Panc1 (cell line): ENCODE measurements at regions of chr9 and their contacts with region 1.

Region 1: DNA sequence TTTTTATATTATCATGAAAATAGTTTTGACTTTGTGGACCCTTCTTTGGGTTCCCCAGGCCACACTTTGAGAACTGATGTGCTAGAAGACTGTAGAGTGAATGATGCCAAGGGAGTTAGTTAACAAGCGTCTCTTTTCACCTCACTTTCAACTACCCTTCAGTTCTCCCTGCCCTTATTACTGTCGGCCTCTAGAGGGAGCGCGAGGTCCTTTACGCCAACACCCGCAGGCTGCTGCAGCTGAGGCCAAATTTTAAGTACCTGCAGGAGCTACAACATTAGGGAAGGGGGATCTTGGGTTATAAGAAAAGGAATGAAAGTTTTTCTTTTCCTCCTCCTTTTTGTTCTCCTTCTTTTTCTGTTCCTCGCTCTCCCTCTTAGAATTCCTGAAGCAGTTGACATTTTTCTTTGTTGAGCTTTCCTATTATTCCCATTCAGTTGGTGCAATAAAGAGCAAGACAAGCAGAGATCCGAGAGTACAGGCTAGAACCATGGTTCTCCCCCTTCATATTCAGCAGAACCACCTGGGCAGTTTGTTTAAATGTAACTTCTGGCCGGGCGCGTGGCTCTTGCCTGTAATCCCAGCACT is 84.0 kb downstream of the ZFAND5 start:
- DNase-seq: peak; percentile 42
- ATAC-seq: peak; percentile 91
- H3K4me3 ChIP-seq: no peak overlapping the region
- H3K27ac ChIP-seq: no peak overlapping the region
- H3K4me1 ChIP-seq: no peaks in the 10 kb centered on the region
- H3K27me3 ChIP-seq: no peaks in the 10 kb centered on the region
- CTCF ChIP-seq: peak; percentile 91

Region 2: GRCh38 chr9:72356041-72356582 is 75.1 kb after region 1 on chr9:
- CTCF ChIA-PET with region 1: no interaction called
- POLR2A ChIA-PET with region 1: no interaction called
- in situ Hi-C with region 1: no loop called
- intact Hi-C with region 1: loop called (anchors 10 kb)
- DNase-seq: no peak
- ATAC-seq: no peak
- H3K4me3 ChIP-seq: no peak overlapping the region
- H3K27ac ChIP-seq: peak overlapping the region; percentile 48
- H3K4me1 ChIP-seq: peaks cover 80% of the 10 kb centered on the region
- H3K27me3 ChIP-seq: no peaks in the 10 kb centered on the region
- CTCF ChIP-seq: no peak

Region 3: DNA sequence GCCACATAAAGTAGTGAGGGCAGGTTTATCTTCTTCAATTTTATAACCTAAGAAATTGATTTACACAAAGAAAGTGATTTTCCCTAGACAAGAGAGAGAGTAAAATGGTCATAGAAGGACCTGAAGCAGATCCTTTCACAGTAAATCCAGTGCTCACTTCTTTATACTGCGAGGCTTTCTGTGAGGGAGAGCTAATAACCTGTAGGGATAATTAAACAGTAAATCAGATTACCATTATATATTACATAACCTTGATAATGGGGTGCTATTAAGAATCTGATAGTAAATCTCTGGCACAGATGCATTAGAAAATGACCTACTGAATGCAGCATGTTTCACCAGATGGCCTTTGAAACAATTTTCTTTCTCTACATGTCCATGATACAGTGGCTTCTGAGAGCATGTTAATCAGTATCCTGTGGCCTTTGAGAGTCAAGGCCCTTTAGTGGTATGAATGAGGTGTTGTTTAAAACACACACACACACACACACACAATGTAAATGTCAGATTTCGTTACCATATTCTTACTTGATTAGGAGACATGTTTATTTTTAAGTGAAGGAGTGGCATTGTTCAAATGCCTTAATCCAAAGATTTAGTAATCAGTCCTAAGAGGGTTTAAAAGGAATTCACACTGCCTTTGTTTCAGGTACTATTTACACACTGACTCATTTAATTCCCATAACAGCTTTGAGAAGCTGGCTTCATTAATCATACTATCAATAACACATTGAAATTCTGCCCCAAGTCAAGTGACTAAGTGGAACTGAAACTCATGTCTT is 547.1 kb after region 1 on chr9:
- CTCF ChIA-PET with region 1: no interaction called
- POLR2A ChIA-PET with region 1: no interaction called
- in situ Hi-C with region 1: no loop called
- intact Hi-C with region 1: loop called (anchors 2 kb)
- DNase-seq: no peak
- ATAC-seq: peak; percentile 70
- H3K4me3 ChIP-seq: no peak overlapping the region
- H3K27ac ChIP-seq: no peak overlapping the region
- H3K4me1 ChIP-seq: no peaks in the 10 kb centered on the region; the same call in 1 of the 2 replicates
- H3K27me3 ChIP-seq: no peaks in the 10 kb centered on the region
- CTCF ChIP-seq: no peak